Panc1 (cell line): ENCODE measurements at regions of chr15 and their contacts with region 1.

Region 1: GRCh38 chr15:89776274-89777072 is at the start of gene MESP2:
- DNase-seq: no peak
- ATAC-seq: peak; percentile 92
- H3K4me3 ChIP-seq: peak within 1 kb of the TSS; percentile 41 to 47
- H3K27ac ChIP-seq: peak within 1 kb of the TSS; percentile 74
- H3K4me1 ChIP-seq: no peaks in the 10 kb centered on the region; the same call in 1 of the 2 replicates
- H3K27me3 ChIP-seq: no peaks in the 10 kb centered on the region
- CTCF ChIP-seq: no peak
- total RNA-seq, gene MESP2: 1.1 TPM

Region 2: DNA sequence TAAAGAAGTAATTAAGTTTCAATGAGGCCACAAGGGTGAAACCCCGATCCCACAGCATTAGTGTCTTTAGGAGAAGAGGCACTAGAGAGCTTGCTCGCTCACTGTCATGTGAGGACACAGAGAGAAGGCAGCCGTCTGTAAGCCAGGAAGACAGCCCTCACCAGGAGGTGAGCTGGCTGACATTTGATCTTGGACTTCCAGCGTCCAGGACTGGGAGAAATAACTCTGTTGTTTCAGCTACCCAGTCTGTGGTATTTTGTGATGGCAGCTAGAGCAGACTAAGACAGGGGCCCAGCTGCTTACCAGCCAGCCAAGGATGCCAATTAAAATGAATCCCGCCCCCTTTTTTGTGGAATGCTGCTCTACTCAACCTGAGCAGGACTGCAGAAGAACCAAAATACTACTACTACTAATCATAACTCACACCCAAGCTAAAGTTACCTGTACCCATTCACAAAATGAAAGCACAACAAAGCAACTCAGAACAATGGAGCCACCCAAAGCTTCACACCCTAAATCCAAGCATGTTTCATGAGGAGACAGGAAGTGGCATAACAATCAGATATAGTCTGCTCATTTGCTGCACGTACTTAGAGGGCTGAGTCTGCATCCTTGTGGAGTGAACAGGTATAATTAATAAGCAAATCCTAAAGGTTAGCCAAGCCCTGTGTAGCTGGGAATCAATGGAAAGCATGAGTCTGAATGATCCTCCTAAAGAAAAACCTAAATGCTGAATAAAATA is 244.5 kb before region 1 on chr15:
- CTCF ChIA-PET with region 1: no interaction called
- POLR2A ChIA-PET with region 1: no interaction called
- in situ Hi-C with region 1: no loop called
- intact Hi-C with region 1: no loop called
- DNase-seq: no peak
- ATAC-seq: no peak
- H3K4me3 ChIP-seq: no peak overlapping the region
- H3K27ac ChIP-seq: no peak overlapping the region
- H3K4me1 ChIP-seq: no peaks in the 10 kb centered on the region
- H3K27me3 ChIP-seq: no peaks in the 10 kb centered on the region
- CTCF ChIP-seq: no peak

Region 3: DNA sequence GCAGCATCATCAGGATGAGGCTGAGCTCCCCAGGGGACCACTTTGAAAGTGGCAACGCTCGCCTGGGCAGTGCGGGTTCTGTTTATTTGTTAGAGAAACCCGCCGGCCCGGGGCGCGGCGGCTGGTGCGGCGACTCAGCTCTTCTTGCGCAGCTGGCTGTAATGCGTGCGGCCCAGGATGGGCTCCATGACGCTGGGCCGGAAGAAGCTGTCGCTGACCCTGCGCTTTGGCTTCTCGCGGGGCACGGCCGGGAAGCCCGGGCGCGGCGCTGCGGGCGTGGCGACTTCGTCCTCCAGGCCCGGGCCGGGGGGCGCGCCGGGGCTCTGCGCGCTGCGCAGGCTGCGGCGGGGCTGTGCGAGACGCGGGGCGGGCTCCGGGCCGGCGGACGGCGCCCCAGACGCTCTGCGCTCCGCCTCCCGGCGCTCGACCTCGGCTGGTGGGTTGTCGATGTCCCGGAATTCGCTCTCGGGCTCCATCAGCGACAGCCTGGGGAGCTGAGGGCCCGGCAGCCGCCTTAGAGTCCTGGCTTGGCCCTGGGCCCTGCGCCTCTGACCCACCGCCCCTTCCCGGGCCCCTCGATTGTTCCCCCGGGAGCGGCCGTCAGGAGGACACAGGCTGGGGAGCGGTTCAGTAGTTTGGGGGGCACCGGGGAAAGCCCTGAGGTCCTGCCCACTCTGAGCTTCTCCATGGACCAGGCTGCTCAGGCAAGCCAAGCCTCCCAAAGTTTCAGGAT is 110.9 kb before region 1 on chr15:
- CTCF ChIA-PET with region 1: no interaction called
- POLR2A ChIA-PET with region 1: no interaction called
- in situ Hi-C with region 1: no loop called
- intact Hi-C with region 1: no loop called
- DNase-seq: no peak
- ATAC-seq: peak; percentile 85
- H3K4me3 ChIP-seq: peak overlapping the region; percentile 45 to 51
- H3K27ac ChIP-seq: peak overlapping the region; percentile 63
- H3K4me1 ChIP-seq: peaks cover 12% of the 10 kb centered on the region
- H3K27me3 ChIP-seq: no peaks in the 10 kb centered on the region; the same call in 1 of the 2 replicates
- CTCF ChIP-seq: no peak

Region 4: DNA sequence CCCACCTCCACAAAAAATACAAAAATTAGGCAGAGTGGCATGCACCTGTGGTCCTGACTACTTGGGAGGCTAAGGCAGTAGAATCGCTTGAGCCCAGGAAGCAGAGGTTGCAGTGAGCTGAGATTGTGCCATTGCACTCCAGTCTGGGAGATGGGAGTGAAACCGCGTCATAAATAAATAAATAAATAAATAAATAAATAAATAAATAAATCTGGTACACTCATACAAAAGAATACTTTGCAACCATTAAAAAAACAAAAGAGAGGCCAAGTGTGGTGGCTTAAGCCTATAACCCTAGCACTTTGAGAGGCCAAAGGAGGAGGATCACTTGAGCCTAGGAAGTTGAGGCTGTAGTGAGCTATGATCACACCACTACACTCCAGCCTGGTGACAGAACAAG is 53.4 kb before region 1 on chr15:
- CTCF ChIA-PET with region 1: no interaction called
- POLR2A ChIA-PET with region 1: no interaction called
- in situ Hi-C with region 1: no loop called
- intact Hi-C with region 1: no loop called
- DNase-seq: no peak
- ATAC-seq: no peak
- H3K4me3 ChIP-seq: no peak overlapping the region
- H3K27ac ChIP-seq: no peak overlapping the region
- H3K4me1 ChIP-seq: no peaks in the 10 kb centered on the region
- H3K27me3 ChIP-seq: no peaks in the 10 kb centered on the region
- CTCF ChIP-seq: no peak

Region 5: GRCh38 chr15:89814112-89814742 is 37.8 kb after region 1 on chr15:
- CTCF ChIA-PET with region 1: interaction called, 12 read pairs
- POLR2A ChIA-PET with region 1: no interaction called
- in situ Hi-C with region 1: no loop called
- intact Hi-C with region 1: no loop called
- DNase-seq: no peak
- ATAC-seq: peak; percentile 50
- H3K4me3 ChIP-seq: peak overlapping the region; percentile 61 to 80
- H3K27ac ChIP-seq: peak overlapping the region; percentile 82
- H3K4me1 ChIP-seq: peaks cover 42% of the 10 kb centered on the region
- H3K27me3 ChIP-seq: no peaks in the 10 kb centered on the region
- CTCF ChIP-seq: no peak

Region 6: GRCh38 chr15:89851673-89852341 is 75.3 kb after region 1 on chr15:
- CTCF ChIA-PET with region 1: interaction called, 13 read pairs
- POLR2A ChIA-PET with region 1: no interaction called
- in situ Hi-C with region 1: no loop called
- intact Hi-C with region 1: no loop called
- DNase-seq: no peak
- ATAC-seq: no peak
- H3K4me3 ChIP-seq: no peak overlapping the region
- H3K27ac ChIP-seq: no peak overlapping the region
- H3K4me1 ChIP-seq: peaks cover 9% of the 10 kb centered on the region
- H3K27me3 ChIP-seq: no peaks in the 10 kb centered on the region
- CTCF ChIP-seq: no peak

Region 7: GRCh38 chr15:90286678-90287077 is 510.2 kb after region 1 on chr15:
- CTCF ChIA-PET with region 1: no interaction called
- POLR2A ChIA-PET with region 1: no interaction called
- in situ Hi-C with region 1: no loop called
- intact Hi-C with region 1: no loop called
- DNase-seq: no peak
- ATAC-seq: peak; percentile 91
- H3K4me3 ChIP-seq: no peak overlapping the region
- H3K27ac ChIP-seq: no peak overlapping the region
- H3K4me1 ChIP-seq: 0 out of 2 replicates have a peak, but pooled peaks cover 3% of the 10 kb centered on the region
- H3K27me3 ChIP-seq: no peaks in the 10 kb centered on the region
- CTCF ChIP-seq: no peak; the same call in 1 of the 2 replicates